A549 (cell line): ENCODE measurements at regions of chr9 and their contacts with region 1.

Region 1: GRCh38 chr9:36190388-36191287 is at the start of gene CLTA:
- DNase-seq: peak; percentile 99
- ATAC-seq: peak; percentile 98 to 99
- H3K4me3 ChIP-seq: peak within 1 kb of the TSS; percentile 87
- H3K27ac ChIP-seq: peak within 1 kb of the TSS; percentile 89 to 96
- H3K4me1 ChIP-seq: peaks cover 28% of the 10 kb centered on the region
- CTCF ChIP-seq: peak; percentile 62
- EP300 ChIP-seq: no peak
- POLR2A ChIP-seq: peak; percentile 93
- RAD21 ChIP-seq: peak in 1 of 2 experiments; percentile 30; a peak in 1 of 5 replicates
- polyA plus RNA-seq, gene CLTA: 203 and 291 TPM in 2 replicates

Region 2: DNA sequence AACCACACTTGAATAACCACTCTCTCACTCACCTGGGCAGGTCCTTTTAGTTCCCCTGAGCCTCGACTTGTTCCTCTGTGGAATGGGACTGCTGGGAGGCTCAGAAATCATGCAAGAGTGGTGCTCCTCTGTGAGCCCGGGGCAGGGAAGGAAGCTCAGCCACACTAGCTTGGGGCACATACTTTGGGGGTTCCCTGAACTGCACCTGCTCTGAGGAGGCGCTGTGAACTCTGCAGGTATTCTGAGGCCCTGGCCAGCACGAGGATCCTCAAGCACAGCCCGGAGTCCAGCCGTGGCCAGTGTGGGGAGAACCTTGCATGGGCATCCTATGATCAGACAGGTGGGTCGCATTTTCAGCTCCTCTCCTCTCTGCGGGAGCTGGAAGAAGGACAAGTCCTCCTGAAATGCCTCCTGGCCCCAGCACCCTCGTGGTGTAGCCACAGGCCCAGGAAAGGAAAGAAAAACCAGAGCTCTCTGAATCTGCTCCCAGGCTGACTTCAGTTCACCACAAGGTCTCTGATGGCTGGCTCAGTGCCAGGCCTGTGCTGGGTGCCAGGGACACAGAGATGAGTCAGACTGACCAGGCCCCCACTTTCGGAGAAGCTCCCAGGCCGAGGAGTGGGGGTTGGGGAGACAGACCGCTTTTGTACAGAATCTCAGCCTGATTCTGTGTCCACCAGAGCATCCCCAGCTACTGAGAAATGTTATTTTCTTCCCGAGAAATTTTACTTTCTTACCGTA is 42.2 kb before region 1 on chr9:
- CTCF ChIA-PET with region 1: interaction called, 8 read pairs
- POLR2A ChIA-PET with region 1: interaction called, 14 read pairs
- DNase-seq: peak; percentile 85 to 91
- ATAC-seq: peak; percentile 81
- H3K4me3 ChIP-seq: no peak overlapping the region
- H3K27ac ChIP-seq: peak overlapping the region; percentile 65 to 82
- H3K4me1 ChIP-seq: peaks cover 26% of the 10 kb centered on the region
- CTCF ChIP-seq: no peak
- EP300 ChIP-seq: no peak
- POLR2A ChIP-seq: no peak
- RAD21 ChIP-seq: no peak; a peak in 2 of 5 replicates

Region 3: DNA sequence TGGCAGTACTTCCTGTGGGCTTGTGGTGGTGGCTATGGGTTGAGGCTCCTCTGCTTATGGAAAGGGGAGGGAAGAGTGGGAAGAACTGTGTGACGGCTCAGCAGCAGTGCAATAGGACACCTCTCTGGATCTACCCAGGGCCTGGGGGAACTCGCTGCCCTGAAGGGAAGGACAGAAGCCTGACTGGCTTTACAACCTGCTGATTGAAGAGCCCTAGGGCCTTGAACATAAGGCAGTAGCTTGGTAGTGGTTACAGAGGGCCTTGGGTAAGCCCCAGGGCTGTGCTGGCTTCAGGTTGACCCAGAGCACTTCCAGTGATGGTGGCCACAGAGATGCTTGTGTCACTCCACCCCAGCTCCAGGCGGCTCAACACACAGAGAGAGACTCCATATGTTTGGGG is 15.9 kb before region 1 on chr9:
- CTCF ChIA-PET with region 1: interaction called, 28 read pairs
- POLR2A ChIA-PET with region 1: interaction called, 11 read pairs
- DNase-seq: no peak
- ATAC-seq: no peak; a peak in 1 of 6 replicates
- H3K4me3 ChIP-seq: no peak overlapping the region
- H3K27ac ChIP-seq: no peak overlapping the region
- H3K4me1 ChIP-seq: no peaks in the 10 kb centered on the region
- CTCF ChIP-seq: no peak
- EP300 ChIP-seq: no peak
- POLR2A ChIP-seq: no peak
- RAD21 ChIP-seq: no peak

Region 4: DNA sequence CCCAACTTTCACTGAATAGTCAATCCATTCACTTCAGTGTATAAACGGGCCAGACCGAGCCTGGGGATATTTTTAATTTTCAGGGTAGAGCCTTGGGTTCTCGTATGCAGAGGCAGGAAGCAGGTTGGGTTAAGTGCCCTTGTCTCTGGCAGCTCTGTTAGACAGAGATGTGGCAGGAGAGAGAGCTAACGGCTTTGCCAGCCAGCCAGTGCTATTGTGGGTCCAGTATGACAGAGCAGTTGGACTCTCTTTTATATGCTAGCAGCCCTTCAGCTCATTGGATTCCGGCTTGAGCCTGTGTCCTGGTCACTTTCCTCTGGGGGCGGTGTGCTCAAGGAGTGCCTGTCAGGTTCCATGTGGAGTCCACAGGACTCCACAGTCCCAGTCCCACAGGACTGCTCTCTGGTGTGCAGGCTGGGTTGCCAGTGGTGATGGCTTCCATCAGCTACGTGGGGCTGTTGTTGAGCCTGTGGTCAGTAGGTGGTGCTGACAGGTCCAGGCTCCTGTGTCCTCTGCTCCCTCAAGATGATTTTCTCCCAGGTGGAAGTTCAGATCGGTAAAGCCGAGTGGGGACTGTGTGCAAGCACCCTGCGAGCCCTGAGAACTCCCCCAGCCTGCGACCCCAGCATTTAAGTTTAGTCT is 14.4 kb after region 1 on chr9:
- CTCF ChIA-PET with region 1: interaction called, 21 read pairs
- POLR2A ChIA-PET with region 1: interaction called, 21 read pairs
- DNase-seq: peak; percentile 54 to 59
- ATAC-seq: peak; percentile 93 to 94
- H3K4me3 ChIP-seq: no peak overlapping the region
- H3K27ac ChIP-seq: no peak overlapping the region
- H3K4me1 ChIP-seq: peaks cover 12% of the 10 kb centered on the region
- CTCF ChIP-seq: peak; percentile 22; the same call in 1 of the 3 replicates
- EP300 ChIP-seq: no peak
- POLR2A ChIP-seq: no peak
- RAD21 ChIP-seq: peak in 1 of 2 experiments; percentile 34; a peak in 2 of 5 replicates